Activated naive CD4-positive, alpha-beta T cell treated with anti-CD3 and anti-CD28 coated beads, Interleukin-2, amount 10 ng/mL, durations not matched to agents 7 days and 5 days (primary cell): ENCODE measurements at regions of chr2 and their contacts with region 1.

Region 1: DNA sequence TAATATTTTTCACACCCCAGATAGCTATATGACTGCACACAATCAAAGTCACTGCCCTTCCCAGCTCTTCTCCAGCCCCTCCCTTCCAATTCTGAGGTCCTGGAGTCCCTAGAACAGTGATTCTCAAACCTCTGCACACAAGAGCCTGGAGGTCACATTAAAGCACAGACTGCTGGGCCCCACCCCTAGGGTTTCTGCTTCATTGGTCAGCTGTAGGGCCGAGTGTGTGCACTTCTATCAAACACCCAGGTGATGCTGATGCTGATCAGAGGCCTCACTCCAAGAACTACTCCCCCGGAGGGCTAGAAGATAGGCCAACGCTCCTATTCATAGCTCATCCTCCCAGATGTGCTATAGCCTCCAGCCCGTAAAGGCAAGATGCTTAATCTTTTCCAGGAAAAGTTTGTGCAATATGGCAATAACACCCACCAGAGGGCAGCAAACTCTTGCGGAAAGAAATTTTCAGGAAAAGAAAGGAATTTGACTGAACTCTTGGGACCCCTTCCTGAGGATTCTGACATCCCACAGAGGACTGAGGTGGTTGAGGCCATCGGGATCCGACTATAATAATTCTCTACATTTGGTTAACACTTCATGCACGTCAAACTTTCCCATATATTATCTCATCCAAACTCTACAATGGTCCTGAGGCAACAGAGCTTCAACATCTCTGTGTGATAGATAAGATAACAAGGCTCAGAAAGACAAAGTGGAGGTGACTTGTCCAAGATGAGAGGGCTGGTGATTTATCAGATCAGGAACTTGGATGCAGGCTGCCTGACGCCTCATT is 194.2 kb upstream of the PKDCC start:
- DNase-seq: peak; percentile 34
- H3K4me3 Mint-ChIP-seq: no peak overlapping the region
- H3K27ac Mint-ChIP-seq: no peak overlapping the region
- H3K4me1 Mint-ChIP-seq: no peaks in the 10 kb centered on the region
- H3K27me3 Mint-ChIP-seq: peaks cover 26% of the 10 kb centered on the region

Region 2: GRCh38 chr2:41782306-41783158 is 71.1 kb before region 1 on chr2:
- CTCF ChIA-PET with region 1: no interaction called
- DNase-seq: peak; percentile 37
- H3K4me3 Mint-ChIP-seq: no peak overlapping the region
- H3K27ac Mint-ChIP-seq: no peak overlapping the region
- H3K4me1 Mint-ChIP-seq: no peaks in the 10 kb centered on the region
- H3K27me3 Mint-ChIP-seq: peaks cover 20% of the 10 kb centered on the region

Region 3: DNA sequence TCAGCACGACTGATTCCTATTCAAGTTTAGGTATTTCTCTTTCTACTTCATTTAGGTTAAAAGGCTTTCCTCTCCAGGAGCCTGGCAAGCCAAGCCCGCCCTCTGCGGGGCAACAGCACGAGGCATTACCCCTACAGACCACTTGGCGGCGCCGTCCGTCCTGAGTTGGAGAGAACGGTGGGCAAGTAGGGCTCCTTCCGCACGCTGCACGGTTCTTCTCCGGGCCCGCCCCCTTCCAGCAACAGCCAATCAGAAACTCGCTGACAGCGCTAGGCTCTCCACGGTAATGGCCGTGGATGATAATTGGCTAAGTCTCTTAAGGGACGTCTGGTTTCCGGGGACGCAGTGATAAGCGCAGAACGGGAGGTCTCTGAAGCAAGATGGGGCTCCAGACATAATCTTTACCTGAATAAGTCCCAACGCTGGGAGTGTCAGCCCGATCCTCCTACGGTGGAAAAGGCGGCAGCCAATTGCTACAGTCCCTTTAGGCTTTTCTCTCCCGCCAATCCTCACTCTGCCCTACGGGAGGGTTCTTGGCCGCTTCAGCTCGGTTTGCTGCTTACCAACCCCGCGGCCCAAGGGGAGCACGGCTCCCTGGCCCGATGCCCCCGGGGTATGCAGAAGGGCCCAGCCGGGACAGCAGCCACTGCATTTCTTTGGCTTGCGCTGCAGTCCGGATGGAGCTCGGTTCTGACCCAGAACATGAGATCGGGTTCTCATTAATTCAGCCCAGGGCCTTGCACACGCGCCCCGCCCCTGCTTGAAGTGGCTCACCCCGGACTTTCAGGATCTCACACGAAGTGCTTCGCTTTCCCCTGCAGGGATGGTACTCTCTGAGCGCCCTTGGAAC is 12.7 kb before region 1 on chr2:
- CTCF ChIA-PET with region 1: interaction called, 17 read pairs
- DNase-seq: peak; percentile 98
- H3K4me3 Mint-ChIP-seq: peak overlapping the region; percentile 95
- H3K27ac Mint-ChIP-seq: peak overlapping the region; percentile 87
- H3K4me1 Mint-ChIP-seq: peaks cover 17% of the 10 kb centered on the region
- H3K27me3 Mint-ChIP-seq: peaks cover 20% of the 10 kb centered on the region

Region 4: GRCh38 chr2:41869542-41870264 is 16.1 kb after region 1 on chr2:
- CTCF ChIA-PET with region 1: interaction called, 10 read pairs
- DNase-seq: peak; percentile 79
- H3K4me3 Mint-ChIP-seq: no peak overlapping the region
- H3K27ac Mint-ChIP-seq: no peak overlapping the region
- H3K4me1 Mint-ChIP-seq: peaks cover 2% of the 10 kb centered on the region
- H3K27me3 Mint-ChIP-seq: peaks cover 46% of the 10 kb centered on the region